Dendritic cell treated with granulocyte-macrophage colony-stimulating factor and Interleukin-4, amounts not matched to agents 40 ng/mL and 50 ng/mL, for 4 days (primary cell): ENCODE measurements at regions of chr10 and their contacts with region 1.

Region 1: GRCh38 chr10:129030996-129031843 is 435.8 kb upstream of the MGMT start:
- H3K4me3 Mint-ChIP-seq: no peak overlapping the region
- H3K27ac Mint-ChIP-seq: no peak overlapping the region
- H3K4me1 Mint-ChIP-seq: no peaks in the 10 kb centered on the region
- H3K27me3 Mint-ChIP-seq: peaks cover 36% of the 10 kb centered on the region

Region 2: DNA sequence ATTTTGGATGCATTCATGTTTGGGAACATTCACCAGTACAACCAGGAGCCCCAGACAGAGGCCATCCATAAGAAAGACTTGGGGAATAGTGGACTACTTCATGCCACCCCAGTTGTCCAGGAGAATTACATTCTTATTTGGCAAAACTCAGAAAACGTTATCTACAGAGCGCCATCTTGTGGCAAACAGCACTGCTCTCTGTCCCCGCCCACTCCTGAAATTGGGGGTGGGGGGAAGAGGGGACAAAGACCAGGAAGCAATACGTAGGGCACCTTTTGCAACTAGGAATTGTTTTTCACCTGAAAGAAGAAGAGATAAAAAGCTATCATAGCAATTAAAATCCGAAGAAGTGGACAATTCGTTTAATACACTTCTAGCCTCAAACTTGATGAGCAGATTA is 301.3 kb after region 1 on chr10:
- intact Hi-C with region 1: loop called (anchors 5 kb)
- H3K4me3 Mint-ChIP-seq: no peak overlapping the region
- H3K27ac Mint-ChIP-seq: no peak overlapping the region
- H3K4me1 Mint-ChIP-seq: no peaks in the 10 kb centered on the region
- H3K27me3 Mint-ChIP-seq: peaks cover 22% of the 10 kb centered on the region

Region 3: DNA sequence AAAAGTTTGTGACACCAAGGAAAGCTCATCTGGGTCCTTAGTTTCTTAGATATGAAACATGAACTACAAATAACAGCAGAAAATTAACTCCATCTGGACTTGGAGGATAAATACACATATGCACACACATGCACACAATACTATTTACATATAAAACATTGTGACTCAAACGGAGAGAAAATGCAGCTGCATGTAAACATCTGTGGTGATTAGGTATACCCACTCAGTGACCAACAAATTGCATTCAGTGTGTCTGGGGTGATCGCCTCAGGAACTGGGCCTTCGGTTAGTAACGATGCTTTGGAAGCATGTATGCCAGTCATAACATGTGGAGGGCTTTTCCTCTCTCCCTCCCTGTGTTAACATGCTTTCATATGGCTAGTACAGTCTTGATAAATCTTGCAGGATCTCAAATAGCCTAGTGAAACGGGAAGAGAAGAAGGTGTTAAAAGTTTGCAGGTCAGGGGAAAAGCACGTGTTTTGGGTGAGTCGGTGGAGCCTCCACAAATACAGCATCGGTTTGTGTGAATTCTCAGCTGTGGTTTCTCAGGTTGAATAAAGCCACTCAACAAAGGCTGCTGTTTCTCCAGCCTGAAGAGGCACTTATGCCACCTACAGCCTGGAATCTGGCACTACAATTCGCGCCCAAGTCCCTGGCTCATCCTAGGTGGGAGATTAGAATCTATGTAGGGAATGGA is 1096.3 kb after region 1 on chr10:
- intact Hi-C with region 1: loop called (anchors 5 kb)
- H3K4me3 Mint-ChIP-seq: no peak overlapping the region
- H3K27ac Mint-ChIP-seq: no peak overlapping the region
- H3K4me1 Mint-ChIP-seq: no peaks in the 10 kb centered on the region
- H3K27me3 Mint-ChIP-seq: peaks cover 57% of the 10 kb centered on the region